Activated CD4-positive, alpha-beta T cell treated with anti-CD3 and anti-CD28 coated beads for 36 hours (primary cell): ENCODE measurements at regions of chr12 and their contacts with region 1.

Region 1: GRCh38 chr12:53321074-53321814 is at the start of gene AAAS:
- DNase-seq: peak; percentile 98
- ATAC-seq: peak; percentile 86
- H3K4me3 Mint-ChIP-seq: peak within 1 kb of the TSS; percentile 87
- H3K27ac Mint-ChIP-seq: peak within 1 kb of the TSS; percentile 95
- H3K4me1 Mint-ChIP-seq: peaks cover 39% of the 10 kb centered on the region
- H3K27me3 Mint-ChIP-seq: no peaks in the 10 kb centered on the region
- total RNA-seq, gene AAAS: 65.5 to 72.5 TPM

Region 2: DNA sequence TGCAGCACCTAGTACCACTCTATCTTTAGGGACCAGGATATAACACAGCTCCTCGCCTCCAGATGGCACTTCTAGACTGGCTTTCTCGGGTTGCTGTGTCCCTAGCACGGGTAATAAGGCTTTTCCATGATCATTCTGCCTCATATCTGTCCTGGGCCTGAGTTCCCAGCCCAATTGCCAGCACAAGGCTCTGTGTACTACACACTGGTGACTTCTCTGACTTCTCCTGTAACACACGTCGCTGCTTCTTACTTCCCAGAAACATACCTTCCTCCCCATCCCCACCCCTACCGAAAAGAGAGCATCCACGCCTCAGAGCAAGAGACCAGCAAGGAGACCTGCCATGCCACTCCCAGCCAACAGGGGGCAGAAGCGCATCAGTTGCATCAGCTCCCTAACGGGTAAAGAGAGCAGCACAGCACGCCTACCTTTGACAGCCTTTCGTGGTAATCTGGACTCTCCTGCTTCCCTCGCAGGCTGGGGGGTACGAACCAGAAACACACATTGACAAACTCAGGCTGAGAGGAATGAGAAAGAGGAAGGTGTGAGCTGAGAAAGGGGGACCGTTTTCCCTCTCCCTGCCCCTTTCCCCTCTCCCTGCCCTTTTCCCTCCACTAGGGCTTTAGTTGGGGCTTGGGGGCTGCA is 161.9 kb before region 1 on chr12:
- CTCF ChIA-PET with region 1: interaction called, 33 read pairs
- POLR2A ChIA-PET with region 1: interaction called, 3 read pairs
- intact Hi-C with region 1: loop called in 1 of 2 experiments (anchors 1 kb)
- DNase-seq: peak; percentile 96
- ATAC-seq: peak; percentile 99
- H3K4me3 Mint-ChIP-seq: peak overlapping the region; percentile 27
- H3K27ac Mint-ChIP-seq: peak overlapping the region; percentile 81
- H3K4me1 Mint-ChIP-seq: peaks cover 11% of the 10 kb centered on the region
- H3K27me3 Mint-ChIP-seq: no peaks in the 10 kb centered on the region

Region 3: GRCh38 chr12:53213348-53213747 is 107.9 kb before region 1 on chr12:
- CTCF ChIA-PET with region 1: interaction called, 70 read pairs
- POLR2A ChIA-PET with region 1: interaction called, 5 read pairs
- intact Hi-C with region 1: loop called (anchors 1 to 10 kb)
- DNase-seq: peak; percentile 92
- ATAC-seq: peak; percentile 70
- H3K4me3 Mint-ChIP-seq: no peak overlapping the region
- H3K27ac Mint-ChIP-seq: no peak overlapping the region
- H3K4me1 Mint-ChIP-seq: peaks cover 62% of the 10 kb centered on the region
- H3K27me3 Mint-ChIP-seq: no peaks in the 10 kb centered on the region

Region 4: GRCh38 chr12:53236443-53237111 is 84.7 kb before region 1 on chr12:
- CTCF ChIA-PET with region 1: no interaction called
- POLR2A ChIA-PET with region 1: no interaction called
- intact Hi-C with region 1: no loop called
- DNase-seq: peak; percentile 54
- ATAC-seq: peak; percentile 24
- H3K4me3 Mint-ChIP-seq: no peak overlapping the region
- H3K27ac Mint-ChIP-seq: peak overlapping the region; percentile 78
- H3K4me1 Mint-ChIP-seq: peaks cover 49% of the 10 kb centered on the region
- H3K27me3 Mint-ChIP-seq: no peaks in the 10 kb centered on the region

Region 5: GRCh38 chr12:53295070-53295890 is 26.0 kb before region 1 on chr12 and contains the start of gene PFDN5:
- CTCF ChIA-PET with region 1: interaction called, 166 read pairs
- POLR2A ChIA-PET with region 1: interaction called, 15 read pairs
- intact Hi-C with region 1: loop called (anchors 1 kb)
- DNase-seq: peak; percentile 93
- ATAC-seq: peak; percentile 88
- H3K4me3 Mint-ChIP-seq: peak within 1 kb of the TSS; percentile 85
- H3K27ac Mint-ChIP-seq: peak within 1 kb of the TSS; percentile 94
- H3K4me1 Mint-ChIP-seq: peaks cover 52% of the 10 kb centered on the region
- H3K27me3 Mint-ChIP-seq: no peaks in the 10 kb centered on the region
- total RNA-seq, gene PFDN5: 253 to 322 TPM

Region 6: GRCh38 chr12:53441040-53441833 is 120.0 kb after region 1 on chr12 and contains the start of gene PRR13:
- CTCF ChIA-PET with region 1: interaction called, 15 read pairs
- POLR2A ChIA-PET with region 1: no interaction called
- intact Hi-C with region 1: loop called in 1 of 2 experiments (anchors 1 kb)
- DNase-seq: peak; percentile 100
- ATAC-seq: peak; percentile 99
- H3K4me3 Mint-ChIP-seq: peak within 1 kb of the TSS; percentile 92
- H3K27ac Mint-ChIP-seq: peak within 1 kb of the TSS; percentile 95
- H3K4me1 Mint-ChIP-seq: peaks cover 30% of the 10 kb centered on the region
- H3K27me3 Mint-ChIP-seq: no peaks in the 10 kb centered on the region
- total RNA-seq, gene PRR13: 250 to 266 TPM

Region 7: GRCh38 chr12:53508534-53509199 is 187.4 kb after region 1 on chr12:
- CTCF ChIA-PET with region 1: interaction called, 13 read pairs
- POLR2A ChIA-PET with region 1: interaction called, 3 read pairs
- intact Hi-C with region 1: loop called (anchors 1 to 2 kb)
- DNase-seq: peak; percentile 92
- ATAC-seq: peak; percentile 99
- H3K4me3 Mint-ChIP-seq: no peak overlapping the region
- H3K27ac Mint-ChIP-seq: peak overlapping the region; percentile 47
- H3K4me1 Mint-ChIP-seq: peaks cover 7% of the 10 kb centered on the region
- H3K27me3 Mint-ChIP-seq: no peaks in the 10 kb centered on the region

Region 8: DNA sequence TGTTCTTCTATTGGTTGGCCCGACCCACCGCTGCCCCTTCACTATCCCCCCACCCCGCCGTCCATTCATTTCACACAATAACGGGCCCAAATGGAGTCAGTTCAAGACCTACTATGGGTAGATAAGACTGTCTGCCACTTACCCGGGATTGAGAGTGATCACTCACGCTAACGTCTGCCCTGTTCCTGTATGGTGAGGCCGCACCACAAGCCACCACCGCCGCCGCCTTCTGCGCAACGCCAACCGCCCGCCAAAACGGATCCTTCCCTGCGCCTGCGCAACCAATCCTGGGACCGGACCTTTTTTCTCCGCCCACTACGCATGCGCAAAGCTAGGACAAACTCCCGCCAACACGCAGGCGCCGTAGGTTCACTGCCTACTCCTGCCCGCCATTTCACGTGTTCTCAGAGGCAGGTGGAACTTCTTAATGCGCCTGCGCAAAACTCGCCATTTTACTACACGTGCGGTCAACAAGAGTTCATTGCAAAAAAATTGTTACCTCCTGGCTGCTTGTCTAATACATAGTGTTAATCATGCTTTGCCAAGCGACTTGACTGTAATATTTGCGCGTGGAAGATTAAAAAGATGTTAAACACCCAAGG is 958.7 kb after region 1 on chr12 and contains the start of gene CBX5:
- CTCF ChIA-PET with region 1: no interaction called
- POLR2A ChIA-PET with region 1: no interaction called
- intact Hi-C with region 1: loop called in 1 of 2 experiments (anchors 5 kb)
- DNase-seq: peak; percentile 100
- ATAC-seq: peak; percentile 50
- H3K4me3 Mint-ChIP-seq: no peak within 1 kb of the TSS
- H3K27ac Mint-ChIP-seq: no peak within 1 kb of the TSS
- H3K4me1 Mint-ChIP-seq: peaks cover 52% of the 10 kb centered on the region
- H3K27me3 Mint-ChIP-seq: no peaks in the 10 kb centered on the region
- total RNA-seq, gene CBX5: 140 to 146 TPM